ENCODE measurements at regions of chr1 and their contacts with region 1.

Region 1: DNA sequence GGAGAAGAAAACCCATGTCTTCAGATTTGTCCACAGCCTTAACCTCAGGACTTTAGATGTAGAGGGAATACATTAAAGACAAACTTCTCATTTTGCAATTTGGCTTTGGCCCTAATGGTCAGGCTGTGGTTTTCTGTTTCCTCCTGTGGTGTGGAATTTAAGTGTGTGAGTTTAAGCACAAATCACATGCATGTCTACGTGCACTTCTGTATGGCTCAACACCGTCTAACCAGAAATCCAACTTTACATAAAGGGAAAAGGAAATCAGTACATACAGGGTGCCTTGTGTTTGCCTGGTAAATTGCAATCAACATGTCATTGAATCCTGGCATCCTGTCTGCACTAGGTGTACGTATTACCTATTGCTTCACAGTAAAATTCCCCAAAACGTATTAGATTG is 1.2 kb upstream of the ZNF124 start:
- DNase-seq: no peak
- ATAC-seq: no peak
- H3K4me3 Mint-ChIP-seq: no peak overlapping the region
- H3K27ac Mint-ChIP-seq: no peak overlapping the region
- H3K4me1 Mint-ChIP-seq: peaks cover 10% of the 10 kb centered on the region
- H3K27me3 Mint-ChIP-seq: no peaks in the 10 kb centered on the region

Region 2: GRCh38 chr1:246566128-246566812 is 606.7 kb before region 1 on chr1 and contains the starts of genes CNST and TFB2M:
- CTCF ChIA-PET with region 1: no interaction called
- POLR2A ChIA-PET with region 1: no interaction called
- intact Hi-C with region 1: no loop called
- DNase-seq: peak; percentile 96
- ATAC-seq: peak; percentile 84
- H3K4me3 Mint-ChIP-seq: peak within 1 kb of the TSS; percentile 83
- H3K27ac Mint-ChIP-seq: peak within 1 kb of the TSS; percentile 94
- H3K4me1 Mint-ChIP-seq: peaks cover 42% of the 10 kb centered on the region
- H3K27me3 Mint-ChIP-seq: no peaks in the 10 kb centered on the region
- total RNA-seq, gene CNST: 23.6 to 24.2 TPM
- total RNA-seq, gene TFB2M: 14.1 to 17.3 TPM

Region 3: GRCh38 chr1:247131236-247131635 is 41.8 kb before region 1 on chr1:
- CTCF ChIA-PET with region 1: no interaction called
- POLR2A ChIA-PET with region 1: interaction called, 4 read pairs
- intact Hi-C with region 1: loop called (anchors 2 kb)
- DNase-seq: no peak
- ATAC-seq: no peak
- H3K4me3 Mint-ChIP-seq: no peak overlapping the region
- H3K27ac Mint-ChIP-seq: no peak overlapping the region
- H3K4me1 Mint-ChIP-seq: peaks cover 3% of the 10 kb centered on the region
- H3K27me3 Mint-ChIP-seq: no peaks in the 10 kb centered on the region

Measured in activated CD4-positive, alpha-beta T cell treated with anti-CD3 and anti-CD28 coated beads for 36 hours (primary cell).